Naive thymus-derived CD4-positive, alpha-beta T cell (primary cell): ENCODE measurements at regions of chr3 and their contacts with region 1.

Region 1: DNA sequence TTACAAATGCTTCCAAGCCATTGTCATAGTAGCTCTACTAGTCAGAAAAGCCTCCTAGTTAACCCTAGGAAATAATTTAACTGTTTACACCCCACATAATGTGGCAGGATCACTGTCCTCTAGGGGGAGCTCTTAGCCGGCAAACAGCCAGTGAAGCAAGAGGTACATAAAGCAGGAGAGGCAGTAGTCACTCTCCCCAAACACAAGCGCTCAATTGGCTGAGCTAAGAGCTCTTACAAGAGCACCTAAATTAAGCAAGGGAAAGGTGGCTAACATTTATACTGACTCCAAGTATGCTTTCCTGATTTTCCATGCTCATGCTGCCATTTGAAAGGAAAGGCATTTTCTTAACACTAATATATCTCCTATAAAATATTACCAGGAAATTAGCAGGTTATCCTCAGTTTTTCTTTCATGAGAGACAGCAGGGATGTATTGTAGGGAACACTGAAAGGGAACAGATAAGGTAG is 37.6 kb downstream of the NCEH1 start:
- DNase-seq: peak; percentile 10 to 61 (median 27)
- ATAC-seq: peak; percentile 70
- H3K4me3 ChIP-seq: no peak overlapping the region
- H3K4me3 Mint-ChIP-seq: no peak overlapping the region
- H3K27ac ChIP-seq: no peak overlapping the region
- H3K27ac Mint-ChIP-seq: no peak overlapping the region
- H3K4me1 ChIP-seq: no peaks in the 10 kb centered on the region
- H3K4me1 Mint-ChIP-seq: peaks cover 0 to 21% (median 2%) of the 10 kb centered on the region in 7 donors
- H3K27me3 ChIP-seq: no peaks in the 10 kb centered on the region
- H3K27me3 Mint-ChIP-seq: no peaks in the 10 kb centered on the region

Region 2: DNA sequence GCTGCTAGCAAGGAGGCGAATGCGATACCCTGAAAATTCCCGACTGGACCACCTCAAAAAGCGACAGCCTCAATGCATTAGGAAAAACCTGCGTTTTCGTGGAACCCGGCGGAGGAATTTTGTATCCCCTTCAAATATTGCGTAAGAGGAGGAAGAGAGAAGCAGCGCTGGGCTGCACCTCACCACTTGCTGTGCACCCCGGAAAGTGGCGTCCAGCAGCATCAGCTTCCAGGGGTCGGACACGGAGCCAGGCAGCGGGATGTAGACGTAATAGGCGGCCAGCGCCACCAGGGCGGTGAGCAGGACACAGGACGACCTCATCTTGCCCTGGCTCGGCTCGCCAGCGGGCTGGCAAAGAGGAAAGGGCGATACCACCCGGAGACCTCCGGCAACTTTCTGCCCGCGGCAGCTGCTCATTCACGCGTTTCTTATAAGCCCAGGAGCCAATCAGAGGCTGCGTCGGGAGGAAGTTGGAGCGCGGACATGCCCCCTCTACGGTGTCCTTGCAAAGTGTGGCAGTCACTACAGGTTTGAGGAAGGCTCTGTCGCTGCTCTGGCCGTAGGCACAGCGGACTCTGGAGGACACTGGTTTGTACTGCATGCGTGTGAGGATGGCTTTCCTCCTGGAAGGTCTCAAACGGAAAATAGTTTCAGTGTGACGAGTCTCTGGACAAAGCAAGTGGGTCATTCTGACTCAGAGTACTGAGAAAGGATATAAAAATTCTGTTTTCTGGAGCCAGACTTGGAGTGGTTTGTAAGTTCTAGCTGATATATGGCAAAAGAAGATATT is 37.6 kb after region 1 on chr3 and contains the start of gene NCEH1:
- CTCF ChIA-PET with region 1: interaction called, 3 read pairs
- POLR2A ChIA-PET with region 1: no interaction called
- intact Hi-C with region 1: loop called in 1 of 2 experiments (anchors 1 kb)
- DNase-seq: peak; percentile 35 to 68 (median 58)
- ATAC-seq: peak; percentile 99
- H3K4me3 ChIP-seq: peak within 1 kb of the TSS; percentile 90
- H3K4me3 Mint-ChIP-seq: peak within 1 kb of the TSS; percentile 93 to 98 (median 97)
- H3K27ac ChIP-seq: peak within 1 kb of the TSS; percentile 45
- H3K27ac Mint-ChIP-seq: peak within 1 kb of the TSS; percentile 53 to 95 (median 82)
- H3K4me1 ChIP-seq: peaks cover 5 to 13% of the 10 kb centered on the region in 2 donors
- H3K4me1 Mint-ChIP-seq: peaks cover 12 to 26% (median 21%) of the 10 kb centered on the region in 7 donors
- H3K27me3 ChIP-seq: no peaks in the 10 kb centered on the region
- H3K27me3 Mint-ChIP-seq: peaks cover 0 to 17% (median 0%) of the 10 kb centered on the region in 5 donors
- total RNA-seq, gene NCEH1: 3.2 to 8.9 (median 4.8) TPM

Region 3: GRCh38 chr3:173045770-173046382 is 372.6 kb after region 1 on chr3:
- CTCF ChIA-PET with region 1: no interaction called
- POLR2A ChIA-PET with region 1: no interaction called
- intact Hi-C with region 1: loop called in 1 of 2 experiments (anchors 10 kb)
- DNase-seq: no peak
- ATAC-seq: no peak
- H3K4me3 ChIP-seq: no peak overlapping the region
- H3K4me3 Mint-ChIP-seq: no peak overlapping the region
- H3K27ac ChIP-seq: no peak overlapping the region
- H3K27ac Mint-ChIP-seq: no peak overlapping the region
- H3K4me1 ChIP-seq: no peaks in the 10 kb centered on the region
- H3K4me1 Mint-ChIP-seq: no peaks in the 10 kb centered on the region
- H3K27me3 ChIP-seq: no peaks in the 10 kb centered on the region
- H3K27me3 Mint-ChIP-seq: no peaks in the 10 kb centered on the region